HepG2 (cell line): ENCODE measurements at regions of chr15 and their contacts with region 1.

Region 1: GRCh38 chr15:67134067-67134838 is 68.9 kb downstream of the SMAD3 start:
- DNase-seq: no peak
- ATAC-seq: peak; percentile 55
- H3K4me3 ChIP-seq: peak overlapping the region in 1 of 3 experiments; percentile 18; a peak in 1 of 6 replicates
- H3K27ac ChIP-seq: peak overlapping the region; percentile 60
- H3K4me1 ChIP-seq: peaks cover 81% of the 10 kb centered on the region
- H3K27me3 ChIP-seq: no peaks in the 10 kb centered on the region
- CTCF ChIP-seq: no peak
- EP300 ChIP-seq: no peak
- POLR2A ChIP-seq: no peak
- RAD21 ChIP-seq: no peak

Region 2: GRCh38 chr15:66968806-66969596 is 165.3 kb before region 1 on chr15:
- CTCF ChIA-PET with region 1: no interaction called
- POLR2A ChIA-PET with region 1: no interaction called
- in situ Hi-C with region 1: no loop called
- intact Hi-C with region 1: no loop called
- DNase-seq: no peak
- ATAC-seq: no peak
- H3K4me3 ChIP-seq: no peak overlapping the region
- H3K27ac ChIP-seq: no peak overlapping the region
- H3K4me1 ChIP-seq: no peaks in the 10 kb centered on the region
- H3K27me3 ChIP-seq: peaks cover 3 to 12% of the 10 kb centered on the region in 2 experiments; a peak in 3 of 5 replicates
- CTCF ChIP-seq: no peak
- EP300 ChIP-seq: no peak
- POLR2A ChIP-seq: no peak
- RAD21 ChIP-seq: no peak

Region 3: DNA sequence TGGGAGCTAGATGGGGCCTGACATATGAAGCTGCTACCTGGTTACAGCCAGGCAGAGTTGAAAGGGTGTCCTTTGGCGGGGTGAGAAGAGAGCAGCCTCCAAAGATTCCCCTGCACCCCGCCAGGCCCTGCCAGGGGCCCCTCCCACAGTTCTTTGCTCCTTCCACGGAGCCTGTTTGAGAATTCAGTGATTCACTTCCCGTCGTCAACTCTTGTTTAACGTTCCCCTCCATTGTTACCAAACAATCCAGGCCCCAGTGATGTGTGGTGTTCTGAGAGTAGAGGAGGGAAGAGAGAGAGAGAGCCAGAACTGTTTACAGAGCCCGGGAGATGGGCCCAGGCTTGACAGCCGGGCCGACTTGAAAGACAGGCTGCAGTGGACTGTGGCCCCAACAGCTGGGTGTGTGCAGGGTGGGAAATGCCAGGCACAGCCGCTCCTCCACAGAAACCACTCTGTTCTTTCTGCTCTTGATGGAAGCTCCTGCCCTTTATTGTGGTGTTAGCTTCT is 12.7 kb after region 1 on chr15:
- CTCF ChIA-PET with region 1: no interaction called
- POLR2A ChIA-PET with region 1: interaction called, 37 read pairs
- in situ Hi-C with region 1: no loop called
- intact Hi-C with region 1: no loop called
- DNase-seq: peak; percentile 97
- ATAC-seq: peak; percentile 94
- H3K4me3 ChIP-seq: peak overlapping the region; percentile 30 to 44 (median 35); a peak in 4 of 6 replicates
- H3K27ac ChIP-seq: peak overlapping the region; percentile 76
- H3K4me1 ChIP-seq: peaks cover 83% of the 10 kb centered on the region
- H3K27me3 ChIP-seq: no peaks in the 10 kb centered on the region
- CTCF ChIP-seq: no peak
- EP300 ChIP-seq: peak; percentile 37 to 88; a peak in 3 of 4 replicates
- POLR2A ChIP-seq: no peak
- RAD21 ChIP-seq: no peak

Region 4: GRCh38 chr15:67163180-67163579 is 28.9 kb after region 1 on chr15:
- CTCF ChIA-PET with region 1: no interaction called
- POLR2A ChIA-PET with region 1: no interaction called
- in situ Hi-C with region 1: no loop called
- intact Hi-C with region 1: loop called (anchors 1 kb)
- DNase-seq: no peak
- ATAC-seq: no peak
- H3K4me3 ChIP-seq: no peak overlapping the region
- H3K27ac ChIP-seq: no peak overlapping the region
- H3K4me1 ChIP-seq: peaks cover 7% of the 10 kb centered on the region
- H3K27me3 ChIP-seq: no peaks in the 10 kb centered on the region
- CTCF ChIP-seq: no peak
- EP300 ChIP-seq: no peak
- POLR2A ChIP-seq: no peak
- RAD21 ChIP-seq: no peak